HEK293 (cell line): ENCODE measurements at regions of chr15 and their contacts with region 1.

Region 1: DNA sequence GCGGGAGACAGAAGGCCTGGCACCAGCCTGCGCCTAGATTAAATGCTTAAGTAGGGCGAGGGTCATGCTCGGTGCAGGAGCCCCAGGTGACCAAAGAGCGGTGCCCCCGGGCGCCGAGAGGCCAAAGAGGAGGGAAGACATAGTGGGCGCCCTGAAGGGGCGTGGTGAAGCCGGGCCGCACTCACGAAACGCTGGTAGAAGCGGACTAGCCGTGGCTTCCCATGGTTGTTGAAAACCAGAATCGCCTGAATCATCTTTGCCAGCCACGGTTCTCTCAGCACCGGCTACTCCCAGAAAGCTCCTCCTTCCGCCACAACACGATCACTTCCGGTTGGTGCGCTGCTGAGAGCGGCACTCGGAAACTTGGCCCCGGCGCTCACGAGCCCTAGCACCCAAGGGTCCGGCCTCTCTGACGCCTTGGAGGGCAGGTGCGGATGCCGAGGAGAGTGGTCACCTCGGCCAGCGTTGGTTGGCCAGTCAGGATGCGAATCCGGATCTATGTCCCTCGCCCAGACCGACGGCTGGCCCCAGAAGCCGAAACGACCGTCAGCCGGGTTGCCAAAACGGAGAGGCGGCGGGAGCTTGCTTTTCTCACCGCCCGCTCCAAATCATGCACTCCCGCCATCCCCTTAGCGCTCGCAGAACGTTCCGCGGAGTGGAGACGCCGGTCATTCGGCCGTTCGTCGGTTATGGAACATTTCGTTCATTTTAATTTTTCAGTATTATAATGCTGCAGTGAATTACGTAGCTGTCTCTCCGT is at the start of gene AP3S2:
- H3K4me3 ChIP-seq: peak within 1 kb of the TSS; percentile 64
- H3K27ac ChIP-seq: peak within 1 kb of the TSS; percentile 84
- H3K4me1 ChIP-seq: peaks cover 3% of the 10 kb centered on the region
- CTCF ChIP-seq: no peak

Region 2: GRCh38 chr15:89654847-89655805 is 238.8 kb before region 1 on chr15 and contains the start of gene KIF7:
- CTCF ChIA-PET with region 1: no interaction called
- POLR2A ChIA-PET with region 1: no interaction called
- H3K4me3 ChIP-seq: peak within 1 kb of the TSS; percentile 89
- H3K27ac ChIP-seq: peak within 1 kb of the TSS; percentile 86; the same call in 1 of the 2 replicates
- H3K4me1 ChIP-seq: peaks cover 8% of the 10 kb centered on the region; the same call in 1 of the 2 replicates
- CTCF ChIP-seq: peak; percentile 20; the same call in 1 of the 2 replicates

Region 3: DNA sequence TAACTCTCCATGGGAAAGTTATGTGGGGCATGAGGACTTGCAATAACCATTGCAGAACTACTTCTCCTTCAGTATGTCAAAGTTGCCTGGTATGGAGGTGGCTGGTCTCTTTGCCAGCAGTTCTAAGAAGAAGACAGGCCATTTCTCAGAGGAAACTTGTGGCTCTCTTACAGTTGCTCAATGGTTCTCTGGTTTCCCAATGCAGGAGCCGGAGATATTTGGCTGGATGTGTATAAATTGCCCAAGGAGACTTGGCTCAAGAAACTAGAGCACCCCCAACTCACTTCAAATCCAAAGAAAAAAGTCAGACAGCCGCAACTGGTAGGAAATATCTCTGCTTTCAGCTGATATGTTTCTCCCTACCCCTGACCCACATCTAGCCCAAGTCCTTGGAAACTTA is 179.1 kb before region 1 on chr15:
- CTCF ChIA-PET with region 1: no interaction called
- POLR2A ChIA-PET with region 1: no interaction called
- H3K4me3 ChIP-seq: no peak overlapping the region
- H3K27ac ChIP-seq: no peak overlapping the region
- H3K4me1 ChIP-seq: no peaks in the 10 kb centered on the region
- CTCF ChIP-seq: no peak

Region 4: DNA sequence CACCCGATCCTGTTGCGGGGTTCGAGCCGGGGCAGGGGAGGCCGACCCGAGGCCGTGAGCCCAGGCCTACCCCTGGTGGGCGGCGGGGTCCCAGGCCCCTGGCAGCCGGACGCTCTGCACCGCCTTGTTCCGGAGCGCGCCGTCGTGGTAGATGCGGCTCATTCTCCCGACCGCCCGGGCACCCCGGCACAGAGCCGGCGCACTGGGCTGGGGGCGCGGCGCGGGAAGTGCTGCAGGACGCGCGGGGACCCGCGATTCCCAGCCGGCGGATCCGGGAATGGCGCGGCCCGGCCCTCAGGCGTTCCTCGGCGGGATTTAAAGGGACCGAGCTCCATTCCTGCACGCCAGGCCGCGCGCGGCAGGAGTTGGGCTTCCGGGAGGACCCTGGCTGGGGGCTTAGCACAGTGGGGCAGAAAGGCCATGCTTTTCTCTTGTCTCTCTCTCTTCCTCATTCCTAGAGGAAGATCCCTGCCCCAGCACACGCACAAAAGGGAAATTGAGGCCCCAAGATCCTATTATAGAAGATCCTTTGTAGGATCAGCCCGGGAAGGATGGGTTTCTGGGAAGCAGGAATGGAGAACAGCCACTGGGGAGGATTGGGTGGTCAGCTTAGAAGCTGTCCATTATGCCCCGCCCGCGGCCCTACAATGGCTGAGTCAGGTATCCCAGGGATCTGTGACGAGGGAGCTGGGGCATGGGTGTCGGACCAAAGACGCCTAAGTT is 19.0 kb after region 1 on chr15 and contains the start of gene ARPIN:
- CTCF ChIA-PET with region 1: interaction called, 6 read pairs
- POLR2A ChIA-PET with region 1: interaction called, 32 read pairs
- H3K4me3 ChIP-seq: peak within 1 kb of the TSS; percentile 73
- H3K27ac ChIP-seq: peak within 1 kb of the TSS; percentile 91
- H3K4me1 ChIP-seq: peaks cover 14% of the 10 kb centered on the region
- CTCF ChIP-seq: peak; percentile 47; the same call in 1 of the 2 replicates

Region 5: GRCh38 chr15:90086868-90087268 is 193.0 kb after region 1 on chr15:
- CTCF ChIA-PET with region 1: interaction called, 41 read pairs
- POLR2A ChIA-PET with region 1: interaction called, 8 read pairs
- H3K4me3 ChIP-seq: no peak overlapping the region
- H3K27ac ChIP-seq: no peak overlapping the region
- H3K4me1 ChIP-seq: no peaks in the 10 kb centered on the region
- CTCF ChIP-seq: peak; percentile 32; the same call in 1 of the 2 replicates